Heart left ventricle (tissue), 16 donors: ENCODE measurements at regions of chr19 and their contacts with region 1.

Region 1: GRCh38 chr19:38831142-38831605 is 420 bp downstream of the ECH1 start:
- DNase-seq: peak; percentile 56 to 88 (median 77)
- ATAC-seq: peak; percentile 56 to 74 (median 60)
- H3K4me3 ChIP-seq: peak overlapping the region; percentile 43 to 90 (median 72)
- H3K27ac ChIP-seq: peak overlapping the region; percentile 83 to 96 (median 94)
- H3K4me1 ChIP-seq: peaks cover 0 to 50% (median 34%) of the 10 kb centered on the region in 12 donors
- H3K27me3 ChIP-seq: no peaks in the 10 kb centered on the region
- CTCF ChIP-seq: no peak
- POLR2A ChIP-seq: no peak

Region 2: GRCh38 chr19:38647368-38647965 is 183.7 kb before region 1 on chr19 and contains the start of gene ACTN4:
- intact Hi-C with region 1: loop called in 2 of 10 experiments (anchors 5 to 10 kb)
- DNase-seq: peak; percentile 99 to 100 (median 100)
- ATAC-seq: peak; percentile 79 to 92 (median 88)
- H3K4me3 ChIP-seq: peak within 1 kb of the TSS; percentile 62 to 100 (median 92)
- H3K27ac ChIP-seq: peak within 1 kb of the TSS; percentile 73 to 99 (median 96)
- H3K4me1 ChIP-seq: peaks cover 14 to 39% (median 31%) of the 10 kb centered on the region in 12 donors
- H3K27me3 ChIP-seq: no peaks in the 10 kb centered on the region
- CTCF ChIP-seq: no peak
- POLR2A ChIP-seq: peak; percentile 98 to 100
- total RNA-seq, gene ACTN4: 124 to 307 (median 154) TPM

Region 3: DNA sequence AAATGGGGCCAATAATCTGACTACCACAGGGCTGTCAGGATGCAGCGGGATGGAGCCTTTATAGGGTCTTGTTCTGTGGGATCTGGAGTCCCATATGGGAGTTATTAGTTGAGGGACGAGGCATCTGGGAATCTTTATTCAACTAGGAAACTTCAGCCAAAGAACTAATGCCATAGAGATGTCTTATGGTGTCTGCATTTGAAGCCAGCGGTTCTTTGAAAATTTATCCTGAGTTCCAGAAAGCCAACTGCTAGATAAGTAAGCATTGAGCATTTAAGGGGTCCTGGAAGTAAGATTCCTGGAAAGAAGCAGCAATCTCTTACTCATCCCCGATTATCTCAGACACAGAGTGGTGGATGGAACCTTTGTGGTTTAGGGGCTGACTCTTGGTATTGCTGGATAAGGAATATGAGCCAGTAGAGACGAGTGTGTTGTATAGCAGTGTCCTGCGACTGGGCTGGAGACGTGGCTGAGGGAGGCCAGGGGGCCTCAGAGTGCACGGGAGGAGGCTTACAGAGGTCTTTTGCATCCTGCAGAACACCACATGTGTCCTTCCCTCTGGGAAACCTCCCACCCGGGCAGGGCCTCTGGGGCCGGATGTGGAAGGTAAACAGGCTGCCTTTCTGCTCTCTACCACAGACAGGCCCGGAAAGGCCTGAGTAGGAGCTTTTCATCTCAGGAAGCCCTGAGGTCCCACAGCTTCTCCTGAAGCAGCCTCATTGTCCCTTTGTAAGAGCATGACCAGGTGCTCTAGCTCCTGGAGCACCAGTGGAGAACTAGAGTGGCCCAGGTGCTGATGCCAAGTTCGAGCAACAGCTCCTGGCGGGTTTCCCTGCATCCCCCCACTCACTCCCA is 154.9 kb before region 1 on chr19:
- intact Hi-C with region 1: no loop called
- DNase-seq: peak in 3 of 5 donors; percentile 55 to 72 (median 65)
- ATAC-seq: peak; percentile 4 to 50 (median 6)
- H3K4me3 ChIP-seq: no peak overlapping the region
- H3K27ac ChIP-seq: peak overlapping the region; percentile 83 to 96 (median 90)
- H3K4me1 ChIP-seq: peaks cover 41 to 97% (median 88%) of the 10 kb centered on the region in 12 donors
- H3K27me3 ChIP-seq: no peaks in the 10 kb centered on the region
- CTCF ChIP-seq: peak in 1 of 12 donors; percentile 8
- POLR2A ChIP-seq: no peak

Region 4: DNA sequence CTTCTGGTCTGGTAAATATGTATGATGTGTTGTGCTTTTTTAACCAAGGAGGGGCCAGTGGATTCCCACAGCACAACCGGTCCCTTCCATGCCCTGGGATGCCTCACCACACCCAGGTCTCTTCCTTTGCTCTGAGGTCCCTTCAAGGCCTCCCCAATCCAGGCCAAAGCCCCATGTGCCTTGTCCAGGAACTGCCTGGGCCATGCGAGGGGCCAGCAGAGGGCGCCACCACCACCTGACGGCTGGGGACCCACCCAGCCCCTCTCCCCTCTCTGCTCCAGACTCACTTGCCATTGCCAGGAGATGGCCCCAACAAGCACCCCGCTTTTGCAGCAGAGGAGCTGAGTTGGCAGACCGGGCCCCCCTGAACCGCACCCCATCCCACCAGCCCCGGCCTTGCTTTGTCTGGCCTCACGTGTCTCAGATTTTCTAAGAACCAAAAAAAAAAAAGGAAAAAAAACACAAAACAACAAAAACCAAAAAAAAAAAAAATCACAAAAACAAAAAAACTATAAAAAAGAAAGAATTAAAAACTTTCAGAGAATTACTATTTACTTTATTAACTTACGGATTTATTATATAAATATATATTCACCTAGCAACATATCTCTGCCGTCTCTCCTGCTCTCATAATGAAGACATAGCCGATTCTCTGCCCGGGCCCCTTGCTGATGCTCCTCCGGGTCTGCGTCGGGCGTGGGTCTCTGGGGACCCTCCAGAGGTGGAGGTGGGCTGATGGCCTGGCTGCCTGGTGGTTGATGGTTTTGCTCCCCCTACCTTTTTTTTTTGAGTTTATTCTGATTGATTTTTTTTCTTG is 101.3 kb before region 1 on chr19:
- intact Hi-C with region 1: loop called in 2 of 10 experiments (anchors 5 to 10 kb)
- DNase-seq: peak; percentile 58 to 87 (median 78)
- ATAC-seq: peak; percentile 33 to 47 (median 38)
- H3K4me3 ChIP-seq: no peak overlapping the region
- H3K27ac ChIP-seq: peak overlapping the region in 10 of 12 donors; percentile 45 to 80 (median 74)
- H3K4me1 ChIP-seq: peaks cover 7 to 67% (median 40%) of the 10 kb centered on the region in 12 donors
- H3K27me3 ChIP-seq: no peaks in the 10 kb centered on the region
- CTCF ChIP-seq: peak; percentile 66 to 90 (median 76)
- POLR2A ChIP-seq: no peak

Region 5: GRCh38 chr19:38849860-38850435 is 18.8 kb after region 1 on chr19 and contains the start of gene HNRNPL:
- intact Hi-C with region 1: loop called in 5 of 10 experiments (anchors 1 to 2 kb)
- DNase-seq: peak; percentile 99 to 100 (median 100)
- ATAC-seq: peak; percentile 79 to 85 (median 81)
- H3K4me3 ChIP-seq: peak within 1 kb of the TSS; percentile 83 to 100 (median 95)
- H3K27ac ChIP-seq: peak within 1 kb of the TSS; percentile 99 to 100 (median 100)
- H3K4me1 ChIP-seq: peaks cover 9 to 59% (median 46%) of the 10 kb centered on the region in 12 donors
- H3K27me3 ChIP-seq: no peaks in the 10 kb centered on the region
- CTCF ChIP-seq: peak; percentile 21 to 81 (median 56)
- POLR2A ChIP-seq: peak; percentile 40 to 90
- total RNA-seq, gene HNRNPL: 93.6 to 256 (median 165) TPM